Activated CD8-positive, alpha-beta memory T cell treated with anti-CD3 and anti-CD28 coated beads, Interleukin-2, amount 10 ng/mL, durations not matched to agents 7 days and 5 days (primary cell): ENCODE measurements at regions of chr16 and their contacts with region 1.

Region 1: GRCh38 chr16:57091975-57092785 is at the start of gene CPNE2:
- DNase-seq: peak; percentile 46
- ATAC-seq: peak; percentile 69
- H3K4me3 Mint-ChIP-seq: peak within 1 kb of the TSS; percentile 56
- H3K27ac Mint-ChIP-seq: no peak within 1 kb of the TSS
- H3K4me1 Mint-ChIP-seq: peaks cover 10% of the 10 kb centered on the region
- H3K27me3 Mint-ChIP-seq: peaks cover 42% of the 10 kb centered on the region
- total RNA-seq, gene CPNE2: 3.2 to 9.6 TPM

Region 2: DNA sequence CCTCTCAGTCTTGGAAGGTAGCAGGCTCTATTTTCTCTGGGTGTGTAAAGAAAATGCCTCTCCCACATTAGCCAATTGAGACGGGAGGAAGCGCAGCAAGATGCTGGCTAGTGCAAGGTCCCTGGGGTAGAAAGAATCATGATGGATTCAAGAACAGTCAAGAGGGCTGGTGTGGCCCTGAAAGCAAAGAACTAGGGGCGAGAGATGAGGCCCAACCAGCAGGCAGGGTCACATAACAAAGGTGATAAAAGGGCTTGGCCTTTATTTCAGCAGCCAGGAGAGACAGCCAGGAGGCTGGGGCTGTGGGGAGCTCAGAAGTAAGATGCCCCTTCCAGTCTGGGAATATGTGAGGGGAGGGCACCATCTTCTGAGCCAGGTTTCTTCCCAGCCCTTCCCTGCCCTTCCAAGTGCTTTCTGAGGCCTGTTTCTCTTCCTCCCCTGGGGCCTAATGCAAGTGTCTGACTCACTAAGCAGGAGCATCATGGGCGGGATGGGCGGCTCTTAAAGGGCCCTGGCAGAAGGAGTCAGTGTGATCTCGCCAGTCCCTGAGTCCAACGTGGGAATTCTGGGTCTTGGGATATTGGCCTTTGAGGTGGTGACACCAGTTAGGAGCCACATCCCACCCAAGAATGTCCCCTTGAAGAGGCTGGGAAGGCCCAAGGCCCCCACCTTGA is 106.8 kb before region 1 on chr16:
- CTCF ChIA-PET with region 1: no interaction called
- DNase-seq: no peak
- ATAC-seq: no peak
- H3K4me3 Mint-ChIP-seq: no peak overlapping the region
- H3K27ac Mint-ChIP-seq: peak overlapping the region; percentile 56
- H3K4me1 Mint-ChIP-seq: peaks cover 58% of the 10 kb centered on the region
- H3K27me3 Mint-ChIP-seq: no peaks in the 10 kb centered on the region

Region 3: DNA sequence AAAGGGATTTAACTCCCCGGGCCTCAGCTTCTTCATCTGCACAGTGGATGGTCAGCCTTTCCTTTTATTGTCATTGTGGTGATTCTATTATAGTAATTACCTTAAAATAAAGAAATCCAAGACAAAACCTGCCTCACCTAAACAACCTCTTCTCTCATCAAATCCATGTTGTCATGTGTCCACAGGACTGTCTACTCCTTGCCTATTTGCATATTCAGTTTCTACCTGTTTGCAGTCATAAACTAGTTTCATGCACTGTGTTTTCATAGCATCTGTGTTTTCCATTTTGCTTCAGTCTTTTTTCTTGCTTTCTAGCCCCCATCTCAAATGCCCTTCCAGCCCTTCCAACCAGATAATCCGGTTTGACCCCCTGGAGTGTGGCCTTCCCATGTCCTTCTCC is 44.1 kb before region 1 on chr16:
- CTCF ChIA-PET with region 1: no interaction called
- DNase-seq: no peak
- ATAC-seq: no peak
- H3K4me3 Mint-ChIP-seq: no peak overlapping the region
- H3K27ac Mint-ChIP-seq: no peak overlapping the region
- H3K4me1 Mint-ChIP-seq: peaks cover 18% of the 10 kb centered on the region
- H3K27me3 Mint-ChIP-seq: no peaks in the 10 kb centered on the region

Region 4: GRCh38 chr16:57128771-57129389 is 36.7 kb after region 1 on chr16:
- CTCF ChIA-PET with region 1: interaction called, 13 read pairs
- DNase-seq: peak; percentile 86
- ATAC-seq: peak; percentile 81
- H3K4me3 Mint-ChIP-seq: peak overlapping the region; percentile 74
- H3K27ac Mint-ChIP-seq: peak overlapping the region; percentile 95
- H3K4me1 Mint-ChIP-seq: peaks cover 82% of the 10 kb centered on the region
- H3K27me3 Mint-ChIP-seq: no peaks in the 10 kb centered on the region

Region 5: GRCh38 chr16:57134982-57135381 is 42.8 kb after region 1 on chr16:
- CTCF ChIA-PET with region 1: interaction called, 12 read pairs
- DNase-seq: peak; percentile 64
- ATAC-seq: peak; percentile 76
- H3K4me3 Mint-ChIP-seq: peak overlapping the region; percentile 53
- H3K27ac Mint-ChIP-seq: peak overlapping the region; percentile 82
- H3K4me1 Mint-ChIP-seq: peaks cover 56% of the 10 kb centered on the region
- H3K27me3 Mint-ChIP-seq: no peaks in the 10 kb centered on the region

Region 6: GRCh38 chr16:57167953-57168352 is 75.8 kb after region 1 on chr16:
- CTCF ChIA-PET with region 1: interaction called, 12 read pairs
- DNase-seq: no peak
- ATAC-seq: peak; percentile 78
- H3K4me3 Mint-ChIP-seq: no peak overlapping the region
- H3K27ac Mint-ChIP-seq: no peak overlapping the region
- H3K4me1 Mint-ChIP-seq: peaks cover 4% of the 10 kb centered on the region
- H3K27me3 Mint-ChIP-seq: no peaks in the 10 kb centered on the region

Region 7: GRCh38 chr16:57185944-57186871 is 94.0 kb after region 1 on chr16 and contains the starts of genes PSME3IP1 and RSPRY1:
- CTCF ChIA-PET with region 1: interaction called, 16 read pairs
- DNase-seq: peak; percentile 100
- ATAC-seq: peak; percentile 96
- H3K4me3 Mint-ChIP-seq: peak within 1 kb of the TSS; percentile 97
- H3K27ac Mint-ChIP-seq: peak within 1 kb of the TSS; percentile 93
- H3K4me1 Mint-ChIP-seq: peaks cover 43% of the 10 kb centered on the region
- H3K27me3 Mint-ChIP-seq: no peaks in the 10 kb centered on the region
- total RNA-seq, gene PSME3IP1: 118 to 124 TPM
- total RNA-seq, gene RSPRY1: 32.6 to 33.7 TPM